ENCODE measurements at regions of chr2 and their contacts with region 1.

Region 1: GRCh38 chr2:159921752-159922404 is 123.9 kb upstream of the CD302 start:
- DNase-seq: peak; percentile 79 to 97
- H3K4me3 ChIP-seq: peak overlapping the region in 1 of 4 experiments; percentile 42; a peak in 1 of 8 replicates
- H3K27ac ChIP-seq: no peak overlapping the region
- H3K4me1 ChIP-seq: no peaks in the 10 kb centered on the region
- H3K27me3 ChIP-seq: no peaks in the 10 kb centered on the region; a peak in 1 of 7 replicates
- CTCF ChIP-seq: peak; percentile 84 to 99 (median 98)
- EP300 ChIP-seq: no peak
- POLR2A ChIP-seq: no peak
- RAD21 ChIP-seq: peak; percentile 74 to 81

Region 2: DNA sequence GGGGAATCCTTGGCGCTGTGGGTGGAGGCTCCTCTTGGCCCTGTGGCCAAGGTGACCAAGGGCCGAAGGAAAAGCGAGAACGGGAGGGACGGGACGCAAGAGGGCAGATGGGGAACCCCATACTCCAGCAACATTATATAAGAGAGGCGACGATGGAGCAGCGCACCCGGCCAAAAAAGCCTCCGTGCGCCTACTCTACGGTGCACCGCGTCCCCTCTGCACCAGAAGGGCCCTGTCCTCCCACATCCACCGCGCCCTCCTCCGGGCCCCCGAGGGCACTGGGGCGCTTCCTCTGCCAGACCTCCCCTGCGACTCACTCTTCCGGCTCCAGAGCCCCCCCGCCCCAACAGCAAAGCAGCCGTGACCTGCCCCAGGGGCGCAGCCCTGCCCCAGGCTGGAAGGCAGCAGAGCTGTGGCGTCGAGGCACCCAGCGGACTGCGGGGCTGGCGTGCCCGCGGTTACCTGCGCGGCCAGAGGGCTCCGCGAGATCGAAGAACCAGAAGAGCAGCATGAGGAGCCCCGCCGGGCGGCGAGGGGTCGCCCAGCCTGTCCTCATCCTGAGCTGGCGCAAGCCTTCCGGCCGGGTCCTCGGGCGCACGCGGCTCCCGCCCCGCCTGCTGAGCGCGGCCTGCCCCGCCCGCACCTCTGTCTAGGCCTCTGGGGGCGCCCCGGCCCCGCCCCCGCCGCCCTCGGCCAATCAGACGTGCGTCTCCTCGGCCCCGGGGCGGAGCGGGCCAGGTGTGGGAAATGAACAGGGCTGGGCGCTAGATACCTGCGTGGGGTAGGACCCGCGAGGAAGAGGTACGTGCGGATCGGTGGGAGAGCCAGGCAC is 17.5 kb before region 1 on chr2:
- CTCF ChIA-PET with region 1: interaction called, 22 read pairs
- POLR2A ChIA-PET with region 1: interaction called, 5 read pairs
- DNase-seq: peak in 1 of 2 experiments; percentile 90
- H3K4me3 ChIP-seq: peak within 1 kb of the TSS; percentile 43 to 77 (median 70)
- H3K27ac ChIP-seq: no peak within 1 kb of the TSS
- H3K4me1 ChIP-seq: peaks cover 0 to 2% (median under 1%) of the 10 kb centered on the region in 4 experiments; a peak in 3 of 7 replicates
- H3K27me3 ChIP-seq: peaks cover 0 to 23% (median 21%) of the 10 kb centered on the region in 4 experiments; a peak in 6 of 7 replicates
- CTCF ChIP-seq: no peak
- EP300 ChIP-seq: no peak
- POLR2A ChIP-seq: peak in 1 of 2 experiments; percentile 77; a peak in 2 of 3 replicates
- RAD21 ChIP-seq: no peak

Region 3: GRCh38 chr2:159933040-159933726 is 11.3 kb after region 1 on chr2:
- CTCF ChIA-PET with region 1: interaction called, 20 read pairs
- POLR2A ChIA-PET with region 1: no interaction called
- DNase-seq: no peak
- H3K4me3 ChIP-seq: no peak overlapping the region
- H3K27ac ChIP-seq: no peak overlapping the region
- H3K4me1 ChIP-seq: no peaks in the 10 kb centered on the region
- H3K27me3 ChIP-seq: no peaks in the 10 kb centered on the region
- CTCF ChIP-seq: no peak
- EP300 ChIP-seq: no peak
- POLR2A ChIP-seq: no peak
- RAD21 ChIP-seq: no peak

Region 4: DNA sequence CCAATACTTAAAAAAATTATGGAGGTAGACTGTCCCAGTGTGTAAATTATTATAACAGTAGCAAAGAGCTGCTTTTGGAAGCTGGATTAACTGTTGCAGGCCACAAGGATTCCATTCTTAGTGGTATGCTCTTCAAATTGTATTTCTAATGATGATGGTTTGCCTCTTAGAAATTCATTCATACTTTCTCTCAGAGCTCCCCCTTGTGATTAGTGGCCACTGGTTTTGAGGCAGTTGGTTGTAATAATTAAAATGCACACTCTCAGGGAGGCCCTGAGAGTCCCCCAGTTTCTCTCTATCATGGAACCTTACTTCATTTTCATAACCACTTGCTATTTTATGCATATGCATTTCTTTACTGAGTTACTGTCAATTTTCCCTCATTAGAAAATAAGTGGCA is 18.1 kb after region 1 on chr2:
- CTCF ChIA-PET with region 1: interaction called, 17 read pairs
- POLR2A ChIA-PET with region 1: no interaction called
- DNase-seq: no peak
- H3K4me3 ChIP-seq: no peak overlapping the region
- H3K27ac ChIP-seq: no peak overlapping the region
- H3K4me1 ChIP-seq: no peaks in the 10 kb centered on the region
- H3K27me3 ChIP-seq: no peaks in the 10 kb centered on the region
- CTCF ChIP-seq: peak in 2 of 3 experiments; percentile 23 to 33; a peak in 2 of 4 replicates
- EP300 ChIP-seq: no peak
- POLR2A ChIP-seq: no peak
- RAD21 ChIP-seq: peak; percentile 47 to 58

Region 5: DNA sequence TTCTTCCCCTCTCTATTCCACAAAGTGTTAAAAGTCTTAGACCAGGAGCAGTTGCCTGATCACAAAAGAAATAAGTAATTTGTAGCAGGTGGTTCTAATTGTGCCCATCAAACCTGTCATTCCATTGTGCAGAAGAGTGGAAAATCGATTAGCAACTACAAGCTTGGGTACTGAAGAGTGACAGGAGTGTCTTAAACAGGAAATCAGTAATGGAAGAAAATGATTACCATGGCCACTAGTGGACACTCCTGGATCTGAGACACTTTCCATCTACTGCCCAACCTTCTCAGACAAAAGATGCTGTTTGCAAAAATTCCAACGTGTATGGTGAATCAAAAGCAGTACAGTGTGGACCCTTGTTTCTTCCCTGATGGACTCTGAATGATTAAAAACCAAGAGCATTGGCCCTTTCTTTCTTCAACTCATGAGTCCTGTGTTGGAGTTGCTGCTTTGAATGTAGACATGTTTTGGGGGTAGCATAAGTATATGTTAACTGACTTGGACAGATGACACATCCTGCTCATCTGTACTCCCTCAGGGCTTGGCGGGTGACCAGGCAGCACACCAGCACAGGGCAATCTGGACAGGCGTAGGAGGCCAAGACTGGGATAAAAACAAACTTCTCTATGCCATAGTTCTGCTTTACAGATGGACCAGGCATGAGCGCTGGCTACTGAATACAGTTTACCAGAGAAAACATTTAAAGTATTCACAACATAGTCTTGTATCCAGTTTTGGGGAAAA is 88.7 kb after region 1 on chr2:
- CTCF ChIA-PET with region 1: no interaction called
- POLR2A ChIA-PET with region 1: no interaction called
- DNase-seq: no peak
- H3K4me3 ChIP-seq: no peak overlapping the region
- H3K27ac ChIP-seq: no peak overlapping the region
- H3K4me1 ChIP-seq: no peaks in the 10 kb centered on the region; a peak in 1 of 7 replicates
- H3K27me3 ChIP-seq: no peaks in the 10 kb centered on the region
- CTCF ChIP-seq: no peak
- EP300 ChIP-seq: no peak
- POLR2A ChIP-seq: no peak
- RAD21 ChIP-seq: no peak